Left colon (tissue), 2 donors: ENCODE measurements at regions of chr1 and their contacts with region 1.

Region 1: DNA sequence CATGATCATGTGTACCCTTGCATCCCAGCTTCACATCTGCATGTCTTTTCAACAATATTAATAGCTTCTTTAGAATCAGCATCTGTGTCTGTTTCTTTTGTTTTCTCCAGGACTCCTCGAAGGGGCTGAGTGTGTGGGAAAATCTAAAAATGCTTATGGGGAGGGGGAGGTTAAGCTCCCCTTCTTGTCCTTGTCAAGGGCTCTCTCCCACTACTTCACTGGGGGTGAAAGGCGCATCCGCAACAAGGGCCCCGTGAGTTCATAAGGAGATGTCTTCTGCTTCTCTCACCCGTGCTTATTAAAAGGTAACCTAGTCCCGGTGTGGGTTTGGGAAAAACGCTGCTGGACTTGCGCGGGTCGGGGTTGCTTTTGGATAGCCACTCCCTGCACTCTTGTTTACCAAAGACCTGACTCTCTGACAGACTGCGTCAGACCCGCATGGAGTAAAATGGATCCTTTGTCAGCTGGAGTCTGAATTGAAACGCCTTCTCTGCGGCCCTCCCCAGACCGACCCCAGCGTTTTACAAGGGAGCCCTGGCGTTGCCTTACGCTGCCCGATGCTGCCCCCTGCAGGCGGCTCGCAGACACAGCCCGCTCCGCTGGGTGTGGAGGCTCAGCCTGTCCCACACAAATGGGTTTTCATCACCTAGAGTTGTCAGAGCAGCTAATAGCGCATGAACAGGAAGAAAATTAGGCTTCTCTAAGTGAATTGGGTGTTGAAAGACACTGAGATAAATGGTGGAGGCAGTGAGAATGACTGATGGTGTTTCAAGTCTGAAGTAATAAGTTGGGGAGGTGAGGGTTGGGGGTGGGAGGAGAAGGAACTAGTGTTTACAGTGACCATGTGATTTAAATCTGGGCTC is 53.8 kb downstream of the IER5 start:
- DNase-seq: peak; percentile 71 to 90
- ATAC-seq: peak; percentile 97

Region 2: DNA sequence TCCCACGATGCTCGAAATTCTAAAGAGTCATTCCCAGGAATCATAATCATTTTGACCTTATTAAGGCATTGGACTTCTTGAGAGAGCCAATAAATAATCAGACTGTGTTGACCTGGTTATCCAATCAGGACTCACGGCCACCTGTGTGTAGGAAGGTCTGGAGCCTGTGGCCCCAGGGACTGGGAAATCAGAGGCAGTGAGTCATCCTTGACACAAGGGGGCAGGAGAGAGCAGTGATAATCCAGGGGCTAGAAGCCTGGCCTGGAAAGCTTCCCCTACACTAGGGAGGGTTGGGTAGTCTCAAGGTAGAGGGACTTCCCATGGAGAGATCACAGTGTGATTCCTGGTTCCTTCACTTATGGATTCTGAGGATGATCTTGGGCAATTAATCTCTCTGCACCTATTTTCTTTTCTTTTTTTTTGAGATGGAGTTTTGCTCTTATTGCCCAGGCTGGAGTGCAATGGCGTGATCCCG is 103.9 kb before region 1 on chr1:
- intact Hi-C with region 1: loop called in 1 of 2 experiments (anchors 2 kb)
- DNase-seq: peak; percentile 39 to 40
- ATAC-seq: peak; percentile 37

Region 3: GRCh38 chr1:181088079-181089016 is 54.0 kb before region 1 on chr1 and contains the start of gene IER5:
- intact Hi-C with region 1: loop called (anchors 5 to 10 kb)
- DNase-seq: peak; percentile 97
- ATAC-seq: peak; percentile 73
- total RNA-seq, gene IER5: 13.8 to 19.8 TPM